Right lobe of liver (tissue), 6 donors: ENCODE measurements at regions of chr12 and their contacts with region 1.

Region 1: GRCh38 chr12:553205-554000 is 93.7 kb downstream of the B4GALNT3 start:
- DNase-seq: no peak
- ATAC-seq: peak in 2 of 4 donors; percentile 9 to 41
- H3K4me3 ChIP-seq: no peak overlapping the region
- H3K27ac ChIP-seq: no peak overlapping the region
- H3K4me1 ChIP-seq: no peaks in the 10 kb centered on the region
- H3K27me3 ChIP-seq: no peaks in the 10 kb centered on the region
- CTCF ChIP-seq: no peak
- POLR2A ChIP-seq: no peak

Region 2: DNA sequence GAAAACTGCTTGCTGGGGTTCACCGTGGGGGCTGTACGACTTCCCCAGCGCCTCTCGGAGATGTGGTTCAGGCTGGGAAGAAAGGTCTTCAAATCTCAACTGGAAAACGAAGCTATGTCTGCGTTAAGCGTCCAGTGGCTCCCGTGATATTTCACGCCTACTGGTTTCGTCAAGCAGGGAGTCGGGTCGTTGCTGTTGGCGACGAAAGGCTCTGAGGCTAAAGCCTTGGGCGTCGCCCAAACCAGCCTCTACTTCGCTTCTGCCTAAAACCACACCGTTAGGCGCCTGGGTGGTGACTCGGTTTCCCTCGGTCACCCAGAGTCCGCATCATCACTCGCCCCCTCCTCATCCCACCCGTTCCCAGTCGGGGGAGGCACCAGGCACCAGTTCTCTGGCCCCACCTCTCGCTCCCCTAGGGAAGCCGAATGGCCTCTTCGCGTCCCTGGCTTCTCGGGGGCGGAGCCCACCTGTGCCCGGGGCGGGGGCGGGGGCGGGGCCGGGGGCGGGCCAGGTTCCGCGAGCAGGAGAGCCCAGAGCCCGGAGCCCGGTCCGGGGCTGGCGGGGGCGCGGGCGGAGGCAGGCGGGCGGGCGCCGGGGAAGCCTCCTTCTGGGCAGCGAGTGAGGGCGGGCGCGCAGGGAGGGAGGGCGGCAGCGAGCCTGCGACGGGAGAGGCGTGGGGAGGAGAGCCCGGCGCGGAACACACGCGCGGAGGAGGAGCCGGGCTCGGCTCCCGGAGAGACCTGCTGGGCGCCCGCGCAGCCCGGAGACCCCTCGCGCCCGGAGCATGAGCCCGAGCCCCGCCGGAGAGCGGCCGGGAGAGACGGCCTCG is 93.8 kb before region 1 on chr12 and contains the start of gene B4GALNT3:
- intact Hi-C with region 1: loop called in 1 of 2 experiments (anchors 5 kb)
- DNase-seq: peak; percentile 47 to 60 (median 52)
- ATAC-seq: peak; percentile 71 to 84 (median 81)
- H3K4me3 ChIP-seq: peak within 1 kb of the TSS; percentile 29 to 58 (median 46)
- H3K27ac ChIP-seq: no peak within 1 kb of the TSS
- H3K4me1 ChIP-seq: peaks cover 0 to 5% (median 0%) of the 10 kb centered on the region in 4 donors
- H3K27me3 ChIP-seq: no peaks in the 10 kb centered on the region
- CTCF ChIP-seq: no peak
- POLR2A ChIP-seq: no peak
- total RNA-seq, gene B4GALNT3: 0.12 to 2.0 (median 0.38) TPM

Region 3: GRCh38 chr12:617304-617915 is 64.0 kb after region 1 on chr12:
- intact Hi-C with region 1: no loop called
- DNase-seq: peak; percentile 77 to 85 (median 80)
- ATAC-seq: peak; percentile 86 to 94 (median 89)
- H3K4me3 ChIP-seq: no peak overlapping the region
- H3K27ac ChIP-seq: peak overlapping the region; percentile 23 to 64 (median 51)
- H3K4me1 ChIP-seq: peaks cover 0 to 19% (median 11%) of the 10 kb centered on the region in 4 donors
- H3K27me3 ChIP-seq: no peaks in the 10 kb centered on the region
- CTCF ChIP-seq: no peak
- POLR2A ChIP-seq: peak; percentile 68